ENCODE measurements at regions of chr6 and their contacts with region 1.

Region 1: DNA sequence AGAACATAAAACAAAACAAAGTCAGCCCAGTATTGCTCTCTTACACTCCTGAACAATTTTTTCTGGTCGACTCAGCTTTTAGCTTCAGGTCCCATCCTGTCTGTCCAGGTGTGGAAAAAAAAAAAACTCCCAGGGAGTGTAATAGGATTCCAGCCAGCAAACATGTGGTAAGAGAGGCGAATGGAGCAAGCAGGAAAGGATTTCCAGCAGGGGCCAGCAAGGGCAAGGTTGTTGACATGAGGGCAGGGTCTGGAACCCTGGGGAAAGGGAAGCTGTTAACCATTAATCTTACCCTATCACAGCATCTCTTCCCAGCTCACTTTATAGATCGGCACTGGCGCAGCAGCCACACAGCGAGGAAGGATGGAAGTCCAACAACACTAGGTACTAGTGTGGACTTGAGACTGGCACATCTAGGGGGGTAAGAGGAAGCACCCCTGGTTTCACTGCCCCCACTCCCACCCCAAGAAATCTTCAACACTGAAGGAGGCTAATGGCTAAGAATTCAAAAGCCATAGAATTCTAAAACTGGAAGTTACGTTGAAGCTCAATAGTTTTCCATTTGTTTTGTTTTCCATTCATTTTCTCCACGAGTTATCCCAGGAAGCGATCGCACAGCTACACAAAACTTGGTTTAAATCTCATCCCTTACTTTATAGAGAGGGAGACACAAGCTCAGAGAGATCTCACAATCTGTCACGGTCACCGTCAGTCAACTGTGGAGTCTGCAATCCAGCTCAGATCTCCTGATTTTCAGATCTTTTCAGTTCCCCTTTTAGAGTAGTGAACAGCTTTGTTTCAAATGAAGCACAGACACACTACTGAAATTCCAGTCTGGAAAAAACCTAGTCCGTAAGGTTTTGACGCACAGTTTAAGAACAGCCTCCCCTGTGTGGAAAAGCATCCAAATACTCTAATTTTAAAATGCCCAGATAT is 53.3 kb downstream of the SLC22A23 start:
- DNase-seq: peak in 5 of 6 donors; percentile 80 to 91 (median 88)
- ATAC-seq: peak; percentile 89 to 97 (median 92)
- H3K4me3 ChIP-seq: no peak overlapping the region
- H3K27ac ChIP-seq: peak overlapping the region; percentile 56 to 76 (median 65)
- H3K4me1 ChIP-seq: peaks cover 16 to 72% (median 57%) of the 10 kb centered on the region in 3 donors
- H3K27me3 ChIP-seq: no peaks in the 10 kb centered on the region
- CTCF ChIP-seq: no peak

Region 2: DNA sequence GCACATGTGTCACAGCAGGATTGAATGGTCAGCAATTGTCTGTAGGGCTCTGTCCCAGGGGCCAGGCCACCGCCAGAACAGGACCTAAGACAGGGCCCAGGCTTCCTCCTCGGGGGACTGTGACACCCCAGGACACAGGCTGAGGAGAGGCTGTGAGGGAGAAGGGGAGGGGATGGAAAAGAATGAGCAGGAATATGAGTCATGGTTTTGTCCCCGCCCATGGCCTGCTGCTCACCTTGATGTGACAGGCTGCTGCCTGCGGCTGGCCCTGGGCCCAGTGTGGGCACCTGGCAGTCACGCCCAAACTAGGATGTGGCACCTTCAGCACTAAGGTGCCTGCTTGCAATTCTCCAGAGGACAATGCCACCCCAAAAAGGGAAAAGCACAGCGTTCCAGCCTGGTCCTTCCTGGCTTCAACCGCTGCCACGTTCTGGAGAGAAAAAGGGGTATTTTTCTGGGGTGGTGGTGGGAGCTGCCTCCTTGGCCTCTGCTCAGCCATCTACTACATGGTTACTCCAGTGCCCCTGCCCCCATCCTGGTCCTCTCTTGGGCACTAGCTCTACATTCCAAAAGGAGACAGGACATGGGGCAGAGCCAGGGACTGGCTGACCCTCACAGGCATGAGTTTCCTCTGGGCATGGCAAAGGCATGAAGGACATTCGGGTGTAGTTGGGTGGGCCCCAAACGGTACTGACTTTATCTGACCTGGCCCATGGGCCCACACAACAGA is 40.0 kb before region 1 on chr6:
- intact Hi-C with region 1: loop called in 1 of 3 experiments (anchors 5 kb)
- DNase-seq: peak; percentile 86 to 96 (median 94)
- ATAC-seq: peak; percentile 96 to 98 (median 96)
- H3K4me3 ChIP-seq: no peak overlapping the region
- H3K27ac ChIP-seq: peak overlapping the region; percentile 45 to 88 (median 72)
- H3K4me1 ChIP-seq: peaks cover 12 to 18% (median 13%) of the 10 kb centered on the region in 3 donors
- H3K27me3 ChIP-seq: no peaks in the 10 kb centered on the region
- CTCF ChIP-seq: no peak

Measured in pancreas (tissue), 10 donors.